ENCODE measurements at regions of chr19 and their contacts with region 1.

Region 1: GRCh38 chr19:48993175-48994034 is at the starts of genes GYS1 and RUVBL2:
- DNase-seq: peak; percentile 99
- H3K4me3 Mint-ChIP-seq: peak within 1 kb of the TSS; percentile 98
- H3K27ac Mint-ChIP-seq: peak within 1 kb of the TSS; percentile 95
- H3K4me1 Mint-ChIP-seq: peaks cover 51% of the 10 kb centered on the region
- H3K27me3 Mint-ChIP-seq: no peaks in the 10 kb centered on the region
- total RNA-seq, gene GYS1: 55.1 to 56.3 TPM
- total RNA-seq, gene RUVBL2: 74.7 to 80.1 TPM

Region 2: DNA sequence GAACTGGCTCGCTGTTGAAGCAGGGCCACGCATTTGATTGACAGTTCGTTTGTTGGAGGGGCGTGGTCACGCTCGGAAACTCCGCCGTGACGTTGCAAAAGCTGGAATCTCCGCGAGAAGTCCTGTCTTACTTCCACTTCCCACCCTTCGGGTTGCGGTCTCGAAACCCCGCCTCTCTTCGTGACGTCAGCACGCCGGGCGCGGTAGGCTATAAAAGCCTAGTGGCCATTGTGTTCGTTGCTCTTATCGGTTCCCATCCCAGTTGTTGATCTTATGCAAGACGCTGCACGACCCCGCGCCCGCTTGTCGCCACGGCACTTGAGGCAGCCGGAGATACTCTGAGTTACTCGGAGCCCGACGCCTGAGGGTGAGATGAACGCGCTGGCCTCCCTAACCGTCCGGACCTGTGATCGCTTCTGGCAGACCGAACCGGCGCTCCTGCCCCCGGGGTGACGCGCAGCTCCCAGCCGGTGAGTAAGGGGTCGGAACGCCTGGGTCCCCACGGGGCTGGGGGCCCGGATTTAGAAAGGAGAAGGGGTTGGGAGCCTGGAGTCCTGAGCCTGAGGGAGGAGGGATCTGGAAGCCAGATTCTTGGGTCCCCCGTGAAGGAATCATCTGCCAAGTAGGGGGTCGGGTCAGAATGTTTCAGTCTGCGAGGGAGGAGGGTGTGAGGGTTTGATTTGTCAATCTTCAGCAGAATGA is 121.1 kb before region 1 on chr19 and contains the start of gene PPP1R15A:
- CTCF ChIA-PET with region 1: interaction called, 5 read pairs
- POLR2A ChIA-PET with region 1: interaction called, 16 read pairs
- DNase-seq: peak; percentile 99
- H3K4me3 Mint-ChIP-seq: peak within 1 kb of the TSS; percentile 88
- H3K27ac Mint-ChIP-seq: peak within 1 kb of the TSS; percentile 91
- H3K4me1 Mint-ChIP-seq: peaks cover 44% of the 10 kb centered on the region
- H3K27me3 Mint-ChIP-seq: peaks cover 6% of the 10 kb centered on the region
- total RNA-seq, gene PPP1R15A: 77.2 to 81.4 TPM

Region 3: DNA sequence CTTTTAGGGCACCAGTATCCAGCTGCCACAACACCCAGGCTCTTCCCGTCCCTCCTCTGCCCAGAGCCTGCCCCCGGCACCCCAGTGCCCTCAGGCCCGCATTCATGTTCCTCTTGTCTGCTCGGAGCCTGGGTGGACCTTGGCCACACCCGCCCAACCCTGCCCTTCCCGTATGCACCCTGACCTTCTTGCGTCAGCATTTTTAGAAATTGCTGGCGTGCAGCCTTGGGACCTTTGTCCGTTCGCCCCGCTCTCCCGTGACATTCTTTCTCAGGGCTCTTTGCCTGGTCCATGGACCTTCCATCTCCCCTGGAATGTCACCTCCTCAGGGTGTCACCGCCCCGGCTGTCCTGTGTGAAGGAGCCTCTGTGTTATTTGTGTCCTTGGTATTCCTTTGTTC is 85.7 kb before region 1 on chr19:
- CTCF ChIA-PET with region 1: no interaction called
- POLR2A ChIA-PET with region 1: no interaction called
- DNase-seq: no peak
- H3K4me3 Mint-ChIP-seq: no peak overlapping the region
- H3K27ac Mint-ChIP-seq: no peak overlapping the region
- H3K4me1 Mint-ChIP-seq: peaks cover 7% of the 10 kb centered on the region
- H3K27me3 Mint-ChIP-seq: no peaks in the 10 kb centered on the region

Region 4: DNA sequence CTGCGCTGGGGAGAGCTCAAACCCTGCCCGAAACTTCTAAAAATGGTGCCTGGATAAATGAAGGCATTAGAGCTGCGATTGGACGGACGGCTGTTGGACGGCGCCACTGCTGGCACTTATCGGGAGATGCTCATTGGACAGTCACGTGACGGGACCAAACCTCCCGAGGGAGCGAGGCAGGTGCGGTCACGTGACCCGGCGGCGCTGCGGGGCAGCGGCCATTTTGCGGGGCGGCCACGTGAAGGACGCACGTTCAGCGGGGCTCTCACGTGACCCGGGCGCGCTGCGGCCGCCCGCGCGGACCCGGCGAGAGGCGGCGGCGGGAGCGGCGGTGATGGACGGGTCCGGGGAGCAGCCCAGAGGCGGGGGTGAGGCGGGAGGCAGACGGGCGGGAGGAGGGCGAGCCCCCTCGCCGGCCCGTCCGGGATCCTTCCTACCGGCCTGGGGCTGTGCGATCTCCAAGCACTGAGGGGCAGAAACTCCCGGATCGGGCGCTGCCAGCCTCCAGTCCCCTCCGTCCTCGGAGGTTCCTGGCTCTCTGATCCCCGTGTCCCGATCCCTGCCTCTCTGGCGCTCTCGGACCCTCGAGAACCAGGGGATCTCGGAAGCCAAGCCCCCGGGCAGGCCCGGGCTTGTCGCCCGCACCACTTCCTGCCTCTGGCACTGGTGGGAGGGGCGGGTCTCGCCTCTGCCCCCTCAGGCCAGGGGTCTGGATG is 38.7 kb before region 1 on chr19 and contains the start of gene BAX:
- CTCF ChIA-PET with region 1: interaction called, 30 read pairs
- POLR2A ChIA-PET with region 1: interaction called, 13 read pairs
- DNase-seq: peak; percentile 96
- H3K4me3 Mint-ChIP-seq: peak within 1 kb of the TSS; percentile 78
- H3K27ac Mint-ChIP-seq: peak within 1 kb of the TSS; percentile 90
- H3K4me1 Mint-ChIP-seq: peaks cover 44% of the 10 kb centered on the region
- H3K27me3 Mint-ChIP-seq: no peaks in the 10 kb centered on the region
- total RNA-seq, gene BAX: 255 to 258 TPM

Region 5: GRCh38 chr19:48975947-48976847 is 17.2 kb before region 1 on chr19:
- CTCF ChIA-PET with region 1: interaction called, 103 read pairs
- POLR2A ChIA-PET with region 1: interaction called, 10 read pairs
- DNase-seq: peak; percentile 48
- H3K4me3 Mint-ChIP-seq: no peak overlapping the region
- H3K27ac Mint-ChIP-seq: no peak overlapping the region
- H3K4me1 Mint-ChIP-seq: peaks cover 6% of the 10 kb centered on the region
- H3K27me3 Mint-ChIP-seq: no peaks in the 10 kb centered on the region

Region 6: GRCh38 chr19:49017666-49018351 is 24.4 kb after region 1 on chr19:
- CTCF ChIA-PET with region 1: interaction called, 52 read pairs
- POLR2A ChIA-PET with region 1: interaction called, 15 read pairs
- DNase-seq: peak; percentile 72
- H3K4me3 Mint-ChIP-seq: peak overlapping the region; percentile 82
- H3K27ac Mint-ChIP-seq: no peak overlapping the region
- H3K4me1 Mint-ChIP-seq: peaks cover 38% of the 10 kb centered on the region
- H3K27me3 Mint-ChIP-seq: peaks cover 9% of the 10 kb centered on the region

Measured in activated CD4-positive, alpha-beta memory T cell treated with anti-CD3 and anti-CD28 coated beads, Interleukin-2, amount 10 ng/mL, durations not matched to agents 7 days and 5 days (primary cell).